ENCODE measurements at regions of chr1 and their contacts with region 1.

Region 1: DNA sequence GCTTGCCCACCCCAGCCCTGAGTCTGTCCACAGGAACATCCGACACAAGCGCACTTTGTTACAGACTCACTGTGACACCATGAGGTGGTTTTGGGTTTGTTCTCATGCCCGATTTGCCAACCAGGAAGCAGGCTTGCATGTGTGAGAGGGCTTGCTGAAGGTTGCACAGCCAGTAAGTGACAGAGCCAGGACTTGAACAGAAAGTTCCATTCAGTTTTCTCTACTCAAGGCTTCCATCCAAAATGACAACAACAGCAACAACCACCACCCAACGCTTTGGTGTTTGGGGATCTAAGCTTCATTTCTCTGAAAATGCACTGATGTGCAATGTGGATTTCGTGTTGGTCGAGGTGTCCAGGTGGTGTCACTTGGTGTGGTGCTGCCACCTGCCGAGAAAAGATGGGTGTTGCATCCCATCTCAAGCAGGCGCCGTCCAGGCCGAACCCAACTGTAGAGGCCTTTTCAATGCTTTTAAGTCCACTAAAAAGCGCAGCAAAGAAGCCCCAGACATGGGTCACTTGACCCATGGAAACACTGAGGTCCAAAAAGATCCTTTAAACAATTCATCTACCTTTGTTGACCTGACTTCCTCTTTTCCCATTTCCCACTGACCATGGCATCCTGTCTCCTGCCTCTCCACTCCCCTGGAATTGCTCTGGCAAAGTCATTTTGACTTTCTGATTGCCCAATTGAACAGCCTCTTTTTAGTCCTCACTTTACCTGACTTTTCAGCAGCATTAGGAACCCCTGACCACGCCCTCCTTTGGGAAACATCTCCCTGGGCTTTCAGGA is 12.2 kb downstream of the CITED4 start:
- DNase-seq: no peak
- H3K4me3 ChIP-seq: no peak overlapping the region
- CTCF ChIP-seq: peak; percentile 85

Region 2: DNA sequence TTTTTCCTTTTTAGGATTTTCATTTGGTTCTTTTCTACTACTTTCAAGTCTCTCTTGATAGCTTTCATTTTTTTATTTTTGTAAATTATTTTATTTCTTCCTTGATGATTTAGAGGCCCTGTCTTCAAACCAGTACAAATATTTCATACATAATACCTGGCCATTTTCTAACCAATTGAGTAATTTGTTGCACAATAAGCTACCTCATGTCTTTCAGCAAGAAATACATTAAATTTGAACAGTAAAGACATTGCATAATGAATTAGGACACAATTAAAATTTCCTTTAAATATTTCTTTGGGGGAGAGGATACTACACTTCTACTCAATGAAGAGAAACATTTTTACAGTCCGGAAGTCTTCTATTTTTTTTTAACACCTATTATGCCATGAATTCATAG is 517.3 kb before region 1 on chr1:
- CTCF ChIA-PET with region 1: no interaction called
- POLR2A ChIA-PET with region 1: no interaction called
- DNase-seq: no peak
- H3K4me3 ChIP-seq: no peak overlapping the region
- CTCF ChIP-seq: no peak

Region 3: DNA sequence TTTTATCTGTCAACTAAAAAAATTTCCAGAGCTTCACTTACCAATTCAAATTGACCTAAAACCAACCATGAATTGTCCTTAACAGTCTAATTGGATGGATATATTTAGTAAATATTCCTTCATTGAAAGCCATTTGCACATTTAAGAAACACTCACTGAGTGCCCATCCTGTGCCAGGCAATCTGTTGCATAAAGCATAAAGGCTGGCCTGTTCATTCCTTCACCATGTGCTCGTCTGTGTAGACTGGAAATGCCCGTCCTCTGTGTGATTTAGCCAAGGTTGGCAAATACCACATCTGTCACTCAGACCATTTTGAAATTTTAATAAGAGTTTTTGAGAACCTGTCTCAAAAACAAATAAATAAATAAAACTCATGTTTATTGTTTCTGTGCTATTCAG is 261.4 kb before region 1 on chr1:
- CTCF ChIA-PET with region 1: interaction called, 14 read pairs
- POLR2A ChIA-PET with region 1: no interaction called
- DNase-seq: no peak
- H3K4me3 ChIP-seq: no peak overlapping the region
- CTCF ChIP-seq: no peak

Region 4: DNA sequence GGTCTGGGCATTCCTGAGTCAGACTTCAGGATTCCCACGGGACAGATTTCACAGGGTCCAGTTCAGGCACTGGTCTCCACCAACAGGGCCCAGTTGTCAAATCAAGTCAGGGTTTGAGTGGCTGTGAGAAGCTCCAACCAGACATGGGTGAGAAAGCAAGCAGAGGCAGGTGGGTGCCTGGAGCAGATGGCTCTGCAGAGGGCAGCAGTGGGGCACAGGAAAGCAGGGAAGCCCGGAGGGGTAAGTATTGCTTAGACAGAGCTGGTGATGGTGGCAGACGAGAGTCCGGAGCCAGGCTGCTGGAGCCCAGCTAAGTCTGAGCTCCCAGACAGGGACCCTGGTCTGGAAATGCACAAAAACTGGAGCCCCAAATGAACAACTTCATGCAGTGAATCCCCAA is 224.9 kb before region 1 on chr1:
- CTCF ChIA-PET with region 1: interaction called, 41 read pairs
- POLR2A ChIA-PET with region 1: no interaction called
- DNase-seq: no peak
- H3K4me3 ChIP-seq: no peak overlapping the region
- CTCF ChIP-seq: peak; percentile 24

Region 5: DNA sequence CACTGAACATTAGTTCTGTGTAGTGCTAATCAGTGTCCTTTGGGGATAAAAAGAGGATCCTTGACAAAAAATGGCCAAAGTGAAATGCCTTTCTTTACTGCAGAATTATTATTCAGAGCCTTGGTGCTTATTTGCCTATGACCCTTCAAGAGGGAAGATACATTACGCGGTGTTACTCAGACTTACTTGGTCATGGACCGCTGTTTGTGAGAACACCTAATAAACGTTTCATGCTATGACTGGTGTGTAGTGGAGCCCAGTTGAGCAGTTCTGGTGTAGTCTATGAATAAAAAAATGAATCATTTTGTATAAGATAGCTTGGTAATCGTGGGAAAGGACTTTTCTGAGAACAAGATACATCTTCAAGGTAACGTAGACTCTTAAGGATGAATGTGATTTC is 150.2 kb before region 1 on chr1:
- CTCF ChIA-PET with region 1: no interaction called
- POLR2A ChIA-PET with region 1: no interaction called
- DNase-seq: no peak
- H3K4me3 ChIP-seq: no peak overlapping the region
- CTCF ChIP-seq: no peak

Region 6: DNA sequence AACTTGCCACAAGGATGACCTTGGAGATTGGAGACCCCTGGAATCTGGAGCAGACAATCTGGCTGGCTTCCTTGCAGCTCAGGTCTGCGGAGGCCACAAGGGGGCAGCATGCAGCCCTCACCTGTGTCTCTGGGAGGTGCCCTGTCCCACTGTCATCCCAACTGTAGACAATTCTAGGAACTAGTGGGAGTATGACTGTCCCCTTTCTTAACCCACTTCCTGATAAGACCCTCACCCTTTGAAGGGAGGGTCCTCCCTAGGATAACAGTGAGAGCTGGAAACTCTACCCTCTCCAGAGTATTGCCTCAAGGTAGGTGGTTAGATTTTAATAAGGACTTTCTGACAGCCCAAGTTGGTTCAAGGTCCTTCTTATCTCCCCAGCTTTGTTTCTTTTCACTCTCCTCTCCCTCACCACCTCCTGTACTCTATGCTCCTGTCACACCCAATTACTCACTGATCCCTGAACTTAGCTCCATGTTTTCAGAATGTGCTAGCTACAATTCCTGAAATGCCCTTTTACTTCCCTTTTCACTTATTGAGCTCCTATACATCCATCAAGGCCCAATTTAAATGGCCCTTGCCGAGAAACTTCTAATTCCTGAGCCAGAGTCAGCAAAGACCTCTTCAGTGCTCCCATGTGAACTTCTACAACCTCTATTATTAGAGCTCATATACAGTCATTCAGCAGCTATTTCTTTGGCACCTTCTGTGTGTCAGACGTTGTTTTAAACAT is 75.6 kb before region 1 on chr1:
- CTCF ChIA-PET with region 1: interaction called, 38 read pairs
- POLR2A ChIA-PET with region 1: no interaction called
- DNase-seq: no peak
- H3K4me3 ChIP-seq: no peak overlapping the region
- CTCF ChIP-seq: peak; percentile 75

Region 7: GRCh38 chr1:40833979-40834378 is 16.0 kb before region 1 on chr1:
- CTCF ChIA-PET with region 1: interaction called, 51 read pairs
- POLR2A ChIA-PET with region 1: interaction called, 3 read pairs
- DNase-seq: no peak
- H3K4me3 ChIP-seq: no peak overlapping the region
- CTCF ChIP-seq: no peak

Region 8: DNA sequence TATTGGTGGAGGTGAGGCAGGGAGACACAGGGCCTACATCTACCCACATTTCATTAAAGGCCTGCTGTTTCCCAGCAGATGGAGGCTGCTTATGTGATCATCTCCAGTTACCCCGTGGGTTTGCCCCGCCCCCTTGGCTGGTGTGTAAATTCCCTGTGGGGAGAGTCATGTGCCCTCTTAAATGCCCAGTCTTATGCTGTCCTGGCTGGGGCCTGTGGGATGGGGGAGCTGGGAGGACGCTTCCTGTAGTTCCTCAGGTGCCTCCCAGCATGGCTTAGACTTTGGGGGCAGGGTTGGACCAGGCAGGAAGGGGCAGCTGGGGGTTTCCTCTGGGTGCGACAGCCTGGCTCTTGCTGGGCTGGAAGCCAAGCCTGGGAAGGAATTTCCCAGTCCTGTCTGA is 27.7 kb after region 1 on chr1:
- CTCF ChIA-PET with region 1: interaction called, 13 read pairs
- POLR2A ChIA-PET with region 1: no interaction called
- DNase-seq: peak; percentile 67
- H3K4me3 ChIP-seq: no peak overlapping the region
- CTCF ChIP-seq: no peak

Measured in AG04449 (cell line).